B cell (primary cell): ENCODE measurements at regions of chr1 and their contacts with region 1.

Region 1: DNA sequence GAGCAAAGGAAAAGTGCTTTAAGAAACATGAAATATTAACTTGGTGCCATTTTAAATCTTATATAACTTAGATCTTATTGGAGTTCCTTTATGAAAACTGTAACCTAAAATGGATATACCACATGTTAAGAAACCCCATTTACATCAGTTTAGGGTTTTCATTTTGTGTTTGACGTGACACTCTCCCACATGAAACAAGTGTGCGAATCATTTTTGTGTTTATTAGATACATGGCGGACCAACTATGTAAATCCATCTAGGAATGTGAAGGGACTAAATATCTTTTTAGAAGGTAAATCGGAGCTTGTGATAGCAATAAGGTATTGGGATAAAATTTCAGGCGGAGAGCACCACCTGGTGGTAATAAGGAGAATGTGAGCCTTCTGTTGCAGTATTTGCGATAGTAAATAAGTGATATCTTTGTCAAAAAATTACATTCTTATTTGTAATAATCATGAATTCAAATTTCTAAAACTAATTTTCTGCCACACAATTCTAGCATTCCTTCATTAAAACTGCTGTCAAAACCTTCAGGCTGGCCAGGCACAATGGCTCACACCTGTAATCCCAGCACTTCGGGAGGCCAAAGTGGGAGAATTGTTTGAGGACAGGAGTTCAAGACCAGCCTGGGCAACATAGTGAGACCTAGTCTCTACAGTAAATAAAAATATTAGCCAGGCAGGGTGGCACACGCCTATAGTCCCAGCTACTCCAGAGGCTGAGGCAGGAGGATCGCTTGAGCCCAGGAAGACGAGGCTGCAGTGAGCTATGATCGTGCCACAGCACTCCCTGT is 31.3 kb downstream of the SMAP2 start:
- DNase-seq: peak; percentile 84
- ATAC-seq: peak; percentile 36
- H3K4me3 ChIP-seq: peak overlapping the region in 1 of 5 experiments; percentile 4
- H3K4me3 Mint-ChIP-seq: peak overlapping the region; percentile 61
- H3K27ac ChIP-seq: peak overlapping the region; percentile 76 to 100
- H3K27ac Mint-ChIP-seq: peak overlapping the region; percentile 92
- H3K4me1 ChIP-seq: peaks cover 54 to 58% of the 10 kb centered on the region in 2 donors
- H3K4me1 Mint-ChIP-seq: peaks cover 62% of the 10 kb centered on the region
- H3K27me3 ChIP-seq: no peaks in the 10 kb centered on the region
- H3K27me3 Mint-ChIP-seq: no peaks in the 10 kb centered on the region
- CTCF ChIP-seq: peak; percentile 88

Region 2: DNA sequence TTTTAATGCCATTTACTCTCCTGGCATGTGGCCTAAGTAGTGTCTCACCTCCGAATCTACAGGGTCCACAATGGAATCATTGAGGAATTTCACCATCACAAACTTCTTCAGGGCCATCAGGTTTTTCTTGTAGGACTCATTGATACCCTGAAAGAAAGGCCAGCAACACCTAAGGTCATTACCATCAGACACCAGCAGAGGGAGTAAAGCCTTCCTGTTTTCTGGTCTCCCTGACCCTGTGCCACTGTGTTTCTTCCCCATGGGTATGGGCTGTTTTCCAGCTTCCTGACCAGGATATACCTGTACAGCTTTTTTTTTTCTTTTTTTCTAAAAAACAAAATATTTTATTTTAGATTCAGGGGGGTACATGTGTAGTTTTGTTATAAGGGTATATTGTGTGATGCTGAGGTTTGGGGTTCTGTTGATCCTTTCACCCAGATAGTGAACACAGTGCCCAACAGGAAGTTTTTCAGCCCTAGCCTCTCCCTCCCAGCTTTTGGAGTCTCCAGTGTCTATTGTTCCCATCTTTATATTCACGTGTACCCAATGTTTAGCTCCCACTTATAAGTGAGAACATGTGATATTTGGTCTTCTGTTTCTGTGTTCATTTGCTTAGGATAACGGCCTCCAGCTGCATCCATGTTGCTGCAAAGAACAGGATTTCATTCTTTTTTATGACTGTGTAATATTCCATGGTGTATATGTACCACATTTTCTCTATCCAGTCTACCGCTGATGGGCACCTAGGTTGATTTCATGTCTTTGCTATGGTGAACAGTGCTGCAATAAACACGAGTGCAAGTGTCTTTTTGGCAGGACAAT is 326.1 kb before region 1 on chr1:
- CTCF ChIA-PET with region 1: interaction called, 8 read pairs
- POLR2A ChIA-PET with region 1: no interaction called
- intact Hi-C with region 1: loop called (anchors 2 kb)
- DNase-seq: peak; percentile 74
- ATAC-seq: peak; percentile 87
- H3K4me3 ChIP-seq: no peak overlapping the region
- H3K4me3 Mint-ChIP-seq: no peak overlapping the region
- H3K27ac ChIP-seq: no peak overlapping the region
- H3K27ac Mint-ChIP-seq: no peak overlapping the region
- H3K4me1 ChIP-seq: peaks cover 10 to 21% of the 10 kb centered on the region in 2 donors
- H3K4me1 Mint-ChIP-seq: peaks cover 19% of the 10 kb centered on the region
- H3K27me3 ChIP-seq: no peaks in the 10 kb centered on the region
- H3K27me3 Mint-ChIP-seq: no peaks in the 10 kb centered on the region
- CTCF ChIP-seq: peak; percentile 93

Region 3: GRCh38 chr1:40315239-40315794 is 89.5 kb before region 1 on chr1:
- CTCF ChIA-PET with region 1: interaction called, 27 read pairs
- POLR2A ChIA-PET with region 1: interaction called, 4 read pairs
- intact Hi-C with region 1: loop called (anchors 2 kb)
- DNase-seq: peak; percentile 94
- ATAC-seq: peak; percentile 61
- H3K4me3 ChIP-seq: peak overlapping the region; percentile 43 to 78 (median 66)
- H3K4me3 Mint-ChIP-seq: peak overlapping the region; percentile 92
- H3K27ac ChIP-seq: peak overlapping the region in 1 of 2 donors; percentile 40
- H3K27ac Mint-ChIP-seq: peak overlapping the region; percentile 76
- H3K4me1 ChIP-seq: peaks cover 41 to 59% of the 10 kb centered on the region in 2 donors
- H3K4me1 Mint-ChIP-seq: peaks cover 57% of the 10 kb centered on the region
- H3K27me3 ChIP-seq: peaks cover 0 to 3% (median 1%) of the 10 kb centered on the region in 4 experiments
- H3K27me3 Mint-ChIP-seq: peaks cover 5% of the 10 kb centered on the region
- CTCF ChIP-seq: peak; percentile 95

Region 4: GRCh38 chr1:40363721-40364120 is 41.1 kb before region 1 on chr1:
- CTCF ChIA-PET with region 1: interaction called, 32 read pairs
- POLR2A ChIA-PET with region 1: no interaction called
- intact Hi-C with region 1: loop called (anchors 2 kb)
- DNase-seq: peak; percentile 78
- ATAC-seq: peak; percentile 100
- H3K4me3 ChIP-seq: no peak overlapping the region
- H3K4me3 Mint-ChIP-seq: peak overlapping the region; percentile 27
- H3K27ac ChIP-seq: peak overlapping the region in 1 of 2 donors; percentile 18
- H3K27ac Mint-ChIP-seq: peak overlapping the region; percentile 74
- H3K4me1 ChIP-seq: peaks cover 12 to 13% of the 10 kb centered on the region in 2 donors
- H3K4me1 Mint-ChIP-seq: peaks cover 13% of the 10 kb centered on the region
- H3K27me3 ChIP-seq: no peaks in the 10 kb centered on the region
- H3K27me3 Mint-ChIP-seq: no peaks in the 10 kb centered on the region
- CTCF ChIP-seq: peak; percentile 54

Region 5: GRCh38 chr1:40385437-40386358 is 19.2 kb before region 1 on chr1:
- CTCF ChIA-PET with region 1: interaction called, 128 read pairs
- POLR2A ChIA-PET with region 1: interaction called, 25 read pairs
- intact Hi-C with region 1: loop called (anchors 1 kb)
- DNase-seq: peak; percentile 94
- ATAC-seq: peak; percentile 73
- H3K4me3 ChIP-seq: peak overlapping the region; percentile 30 to 70 (median 31)
- H3K4me3 Mint-ChIP-seq: peak overlapping the region; percentile 87
- H3K27ac ChIP-seq: peak overlapping the region; percentile 99 to 100
- H3K27ac Mint-ChIP-seq: peak overlapping the region; percentile 97
- H3K4me1 ChIP-seq: peaks cover 94 to 98% of the 10 kb centered on the region in 2 donors
- H3K4me1 Mint-ChIP-seq: peaks cover 91% of the 10 kb centered on the region
- H3K27me3 ChIP-seq: no peaks in the 10 kb centered on the region
- H3K27me3 Mint-ChIP-seq: no peaks in the 10 kb centered on the region
- CTCF ChIP-seq: no peak

Region 6: DNA sequence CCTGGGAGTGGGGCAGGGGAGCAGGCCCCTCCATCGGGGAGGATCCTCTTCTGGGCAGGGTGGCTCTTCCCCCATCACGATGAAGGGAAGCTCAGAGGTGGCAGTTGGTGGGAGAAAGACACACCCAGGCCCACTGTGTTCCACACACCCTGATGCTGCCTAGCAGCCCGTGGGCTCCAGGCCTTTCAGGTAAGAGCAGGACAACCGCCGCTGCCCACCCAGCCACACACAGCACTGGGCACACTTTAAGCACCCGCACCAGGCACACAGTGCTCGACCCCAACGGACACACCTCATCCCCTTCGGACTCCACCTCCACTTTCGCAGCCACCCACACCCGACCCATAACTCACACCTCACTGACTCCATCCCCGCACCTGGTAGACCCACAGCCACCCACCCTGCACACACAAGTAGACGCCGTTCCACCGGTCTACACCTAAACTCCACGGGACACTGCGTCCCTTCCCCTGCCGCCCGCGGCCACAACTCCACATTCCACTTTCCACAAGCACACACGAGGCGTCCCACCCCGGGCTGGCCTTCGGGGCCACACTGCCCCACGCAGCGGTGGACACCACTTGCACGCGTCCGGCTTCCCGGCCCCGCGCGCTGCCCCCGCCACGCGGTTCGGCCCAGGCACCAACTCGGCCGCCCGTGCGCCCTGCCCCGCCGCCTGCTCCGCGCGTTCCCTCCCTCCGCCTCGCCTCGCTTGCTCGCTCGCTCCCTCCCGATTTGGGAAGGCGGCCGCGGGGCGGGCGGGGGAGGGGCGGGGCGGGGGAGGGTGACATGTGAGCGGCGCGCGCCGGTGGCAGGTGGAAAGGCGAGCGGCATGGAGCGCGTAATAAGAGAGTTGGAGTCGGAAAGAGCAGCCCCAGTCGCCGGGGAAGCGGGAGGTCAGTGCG is 378.4 kb after region 1 on chr1 and contains the start of gene KCNQ4:
- CTCF ChIA-PET with region 1: no interaction called
- POLR2A ChIA-PET with region 1: no interaction called
- intact Hi-C with region 1: no loop called
- DNase-seq: peak; percentile 53
- ATAC-seq: peak; percentile 67
- H3K4me3 ChIP-seq: peak within 1 kb of the TSS in 3 of 5 experiments; percentile 20 to 41 (median 38)
- H3K4me3 Mint-ChIP-seq: peak within 1 kb of the TSS; percentile 91
- H3K27ac ChIP-seq: no peak within 1 kb of the TSS
- H3K27ac Mint-ChIP-seq: peak within 1 kb of the TSS; percentile 59
- H3K4me1 ChIP-seq: peaks cover 12 to 16% of the 10 kb centered on the region in 2 donors
- H3K4me1 Mint-ChIP-seq: peaks cover 10% of the 10 kb centered on the region
- H3K27me3 ChIP-seq: peaks cover 0 to 40% (median 14%) of the 10 kb centered on the region in 4 experiments
- H3K27me3 Mint-ChIP-seq: peaks cover 32% of the 10 kb centered on the region
- CTCF ChIP-seq: no peak
- total RNA-seq, gene KCNQ4: 0.20 and 0.34 TPM in 2 replicates